CD8-positive, alpha-beta T cell (primary cell): ENCODE measurements at regions of chrX and their contacts with region 1.

Region 1: DNA sequence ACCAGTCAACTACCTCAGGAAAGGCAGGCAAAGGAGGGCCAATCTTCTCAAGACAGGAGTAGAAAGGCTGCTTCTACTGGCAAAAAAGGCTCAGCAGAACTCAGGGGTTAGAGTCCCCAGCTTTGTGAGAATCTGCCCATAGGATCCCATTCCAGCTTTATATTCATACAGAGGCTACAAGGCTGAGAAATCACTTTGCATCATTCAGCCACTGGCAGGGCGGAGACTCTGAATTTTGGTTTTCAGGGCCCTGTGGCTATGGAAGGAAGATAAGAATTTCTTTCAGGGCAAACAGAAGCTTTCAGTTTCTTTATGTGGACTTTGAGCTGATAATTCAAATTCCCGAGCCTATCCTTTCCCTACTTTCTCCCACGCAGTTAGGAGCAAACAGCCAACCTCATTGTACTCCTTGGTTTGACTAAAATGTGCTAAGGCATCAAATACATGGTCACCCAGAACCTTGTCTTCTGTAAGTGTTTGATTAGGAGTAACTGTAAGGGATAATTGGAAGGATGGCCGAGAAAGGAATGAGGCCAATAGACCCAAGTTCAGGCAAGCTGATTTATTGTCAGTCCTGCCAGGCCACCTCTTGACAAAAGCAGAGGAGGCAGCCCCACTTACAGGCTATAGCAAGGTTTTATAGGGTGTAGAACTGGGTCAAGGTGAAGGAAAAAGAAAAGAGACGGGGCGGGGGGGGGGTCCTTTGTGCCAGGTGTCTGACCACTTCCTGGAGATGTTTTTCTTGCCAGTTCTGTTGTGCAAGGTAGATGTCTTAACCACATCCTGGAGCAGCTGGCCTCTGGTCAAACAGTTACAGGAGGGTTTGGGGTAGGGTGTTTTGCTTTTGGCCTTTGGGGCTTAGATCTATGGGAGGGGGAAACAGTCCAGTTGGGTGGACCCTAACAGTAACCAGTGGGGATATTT is 165.3 kb upstream of the PPP1R2C start:
- DNase-seq: peak in 7 of 9 experiments; percentile 15 to 81 (median 49)
- ATAC-seq: peak; percentile 33
- H3K4me3 ChIP-seq: peak overlapping the region in 1 of 2 experiments; percentile 7
- H3K4me3 Mint-ChIP-seq: peak overlapping the region; percentile 42
- H3K27ac ChIP-seq: peak overlapping the region; percentile 53 to 82
- H3K27ac Mint-ChIP-seq: peak overlapping the region; percentile 90
- H3K4me1 ChIP-seq: peaks cover 91% of the 10 kb centered on the region
- H3K4me1 Mint-ChIP-seq: peaks cover 91% of the 10 kb centered on the region
- H3K27me3 ChIP-seq: no peaks in the 10 kb centered on the region
- H3K27me3 Mint-ChIP-seq: no peaks in the 10 kb centered on the region
- CTCF ChIP-seq: no peak

Region 2: DNA sequence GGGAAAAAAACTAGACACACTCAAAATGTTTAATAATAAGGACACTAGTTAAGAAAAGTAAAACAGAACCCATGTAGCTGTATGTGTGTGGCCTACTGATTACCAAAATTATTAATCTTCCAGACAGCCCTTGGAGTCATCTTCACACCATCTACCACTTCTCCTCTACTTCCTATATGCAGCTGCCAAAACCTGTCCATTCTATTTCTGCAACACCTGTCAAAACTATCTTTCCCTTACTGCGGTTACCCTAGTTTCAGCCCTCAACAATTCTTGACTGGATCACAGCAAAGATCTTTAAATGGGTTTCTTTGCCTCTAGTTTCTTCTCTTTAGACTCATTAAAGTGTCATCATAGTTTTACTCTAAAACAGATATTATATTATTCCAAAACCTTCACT is 1146.7 kb before region 1 on chrX:
- CTCF ChIA-PET with region 1: interaction called, 5 read pairs
- POLR2A ChIA-PET with region 1: interaction called, 3 read pairs
- intact Hi-C with region 1: loop called in 1 of 2 experiments (anchors 5 kb)
- DNase-seq: peak in 2 of 9 experiments; percentile 8
- ATAC-seq: no peak
- H3K4me3 ChIP-seq: no peak overlapping the region
- H3K4me3 Mint-ChIP-seq: no peak overlapping the region
- H3K27ac ChIP-seq: no peak overlapping the region
- H3K27ac Mint-ChIP-seq: peak overlapping the region; percentile 56
- H3K4me1 ChIP-seq: peaks cover 13% of the 10 kb centered on the region
- H3K4me1 Mint-ChIP-seq: peaks cover 37% of the 10 kb centered on the region
- H3K27me3 ChIP-seq: no peaks in the 10 kb centered on the region
- H3K27me3 Mint-ChIP-seq: no peaks in the 10 kb centered on the region
- CTCF ChIP-seq: no peak

Region 3: DNA sequence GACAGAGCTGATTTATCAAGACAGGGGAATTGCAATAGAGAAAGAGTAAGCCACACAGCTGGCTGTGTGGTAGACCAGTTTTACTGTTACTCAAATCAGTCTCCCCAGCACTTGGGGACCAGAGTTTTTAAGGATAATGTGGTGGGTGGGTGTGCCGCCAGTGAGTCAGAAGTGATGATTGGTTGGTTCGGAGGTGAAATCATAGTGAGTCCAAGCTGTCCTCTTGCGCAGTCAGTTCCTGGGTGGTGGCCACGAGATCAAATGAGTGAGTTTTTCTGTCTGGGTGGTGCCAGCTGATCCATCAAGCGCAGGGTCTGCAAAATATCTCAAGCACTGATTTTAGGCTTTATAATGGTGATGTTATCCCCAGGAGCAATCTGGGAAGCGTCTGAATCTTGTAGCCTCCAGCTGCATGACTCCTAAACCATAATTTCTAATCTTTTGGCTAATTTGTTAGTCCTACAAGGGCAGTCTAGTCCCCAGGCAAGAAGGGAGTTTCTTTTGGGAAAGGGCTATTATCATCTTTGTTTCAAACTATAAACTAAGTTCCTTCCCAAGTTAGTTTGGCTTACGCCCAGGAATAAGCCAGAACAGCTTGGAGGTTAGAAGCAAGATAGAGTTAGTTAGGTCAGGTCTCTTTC is 121.4 kb before region 1 on chrX:
- CTCF ChIA-PET with region 1: no interaction called
- POLR2A ChIA-PET with region 1: no interaction called
- intact Hi-C with region 1: no loop called
- DNase-seq: no peak
- ATAC-seq: no peak
- H3K4me3 ChIP-seq: no peak overlapping the region
- H3K4me3 Mint-ChIP-seq: no peak overlapping the region
- H3K27ac ChIP-seq: no peak overlapping the region
- H3K27ac Mint-ChIP-seq: no peak overlapping the region
- H3K4me1 ChIP-seq: no peaks in the 10 kb centered on the region
- H3K4me1 Mint-ChIP-seq: peaks cover 2% of the 10 kb centered on the region
- H3K27me3 ChIP-seq: no peaks in the 10 kb centered on the region
- H3K27me3 Mint-ChIP-seq: no peaks in the 10 kb centered on the region
- CTCF ChIP-seq: no peak

Region 4: GRCh38 chrX:42955349-42955748 is 12.0 kb after region 1 on chrX:
- CTCF ChIA-PET with region 1: no interaction called
- POLR2A ChIA-PET with region 1: no interaction called
- intact Hi-C with region 1: no loop called
- DNase-seq: no peak
- ATAC-seq: no peak
- H3K4me3 ChIP-seq: no peak overlapping the region
- H3K4me3 Mint-ChIP-seq: peak overlapping the region; percentile 56
- H3K27ac ChIP-seq: no peak overlapping the region
- H3K27ac Mint-ChIP-seq: peak overlapping the region; percentile 67
- H3K4me1 ChIP-seq: peaks cover 24% of the 10 kb centered on the region
- H3K4me1 Mint-ChIP-seq: peaks cover 29% of the 10 kb centered on the region
- H3K27me3 ChIP-seq: no peaks in the 10 kb centered on the region
- H3K27me3 Mint-ChIP-seq: no peaks in the 10 kb centered on the region
- CTCF ChIP-seq: no peak

Region 5: DNA sequence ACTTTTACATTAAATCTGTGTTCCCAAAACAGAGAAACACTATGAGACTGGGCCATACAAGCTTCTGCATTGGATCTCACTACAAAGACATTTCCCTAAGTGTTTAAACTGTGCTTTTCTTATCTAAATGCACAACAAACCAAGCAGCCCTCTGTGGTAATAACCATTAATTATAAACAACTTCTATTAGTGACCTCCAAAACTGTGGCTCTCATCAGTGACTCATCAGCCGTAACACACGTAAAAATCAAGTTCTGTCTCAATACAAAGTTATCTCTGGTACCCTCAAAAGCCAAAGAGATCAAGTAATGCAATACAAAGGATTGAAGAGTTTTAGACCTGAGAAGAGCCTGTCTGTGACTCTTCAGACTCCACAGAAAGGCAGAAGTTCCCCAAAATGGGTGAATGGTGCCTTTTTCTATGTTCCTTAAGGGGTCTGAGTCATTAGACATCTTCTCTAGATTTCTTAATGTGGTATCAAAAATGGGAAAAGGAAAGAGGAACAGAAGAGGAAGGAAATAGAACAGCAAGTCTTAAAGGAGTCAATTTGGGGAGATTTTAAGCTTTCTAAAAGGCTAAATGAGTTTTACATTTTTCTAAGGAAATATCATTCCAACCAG is 24.5 kb after region 1 on chrX:
- CTCF ChIA-PET with region 1: no interaction called
- POLR2A ChIA-PET with region 1: no interaction called
- intact Hi-C with region 1: no loop called
- DNase-seq: no peak
- ATAC-seq: no peak
- H3K4me3 ChIP-seq: no peak overlapping the region
- H3K4me3 Mint-ChIP-seq: no peak overlapping the region
- H3K27ac ChIP-seq: no peak overlapping the region
- H3K27ac Mint-ChIP-seq: no peak overlapping the region
- H3K4me1 ChIP-seq: no peaks in the 10 kb centered on the region
- H3K4me1 Mint-ChIP-seq: peaks cover 4% of the 10 kb centered on the region
- H3K27me3 ChIP-seq: no peaks in the 10 kb centered on the region
- H3K27me3 Mint-ChIP-seq: no peaks in the 10 kb centered on the region
- CTCF ChIP-seq: no peak

Region 6: DNA sequence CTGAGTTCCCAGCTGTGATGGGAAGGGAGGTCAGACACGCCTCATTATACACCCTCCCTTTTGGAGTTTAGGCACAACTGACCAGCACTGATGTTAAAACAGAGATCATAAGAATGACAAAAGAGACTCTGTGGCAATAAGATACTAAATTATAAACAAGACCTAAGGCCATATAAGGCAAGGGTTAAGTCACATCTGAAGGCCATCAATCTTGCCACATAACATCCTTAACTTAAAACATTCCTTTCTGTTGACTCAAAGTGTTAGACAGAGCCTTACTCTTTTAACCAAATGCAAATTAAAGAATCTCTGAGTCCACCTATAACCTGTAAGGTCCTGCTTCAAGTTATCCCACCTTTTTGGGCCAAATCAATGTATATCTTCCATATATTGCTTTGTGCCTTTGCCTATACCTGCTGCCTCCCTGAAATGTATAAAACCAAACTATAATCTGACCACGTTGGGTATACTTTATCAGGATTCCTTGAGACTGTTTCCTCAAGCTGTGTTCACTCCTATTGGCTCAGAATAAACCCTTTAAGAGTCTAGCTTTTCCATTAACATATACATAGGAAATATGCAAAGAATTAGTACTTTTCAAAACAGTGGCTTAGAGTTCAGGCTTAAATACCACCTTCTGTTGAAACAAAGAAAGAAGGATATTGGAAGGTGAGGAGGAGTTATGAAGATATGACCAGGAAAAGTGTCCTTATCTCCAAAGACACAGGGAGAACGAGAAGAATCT is 49.1 kb after region 1 on chrX:
- CTCF ChIA-PET with region 1: no interaction called
- POLR2A ChIA-PET with region 1: no interaction called
- intact Hi-C with region 1: loop called in 1 of 2 experiments (anchors 10 kb)
- DNase-seq: no peak
- ATAC-seq: no peak
- H3K4me3 ChIP-seq: no peak overlapping the region
- H3K4me3 Mint-ChIP-seq: no peak overlapping the region
- H3K27ac ChIP-seq: no peak overlapping the region
- H3K27ac Mint-ChIP-seq: no peak overlapping the region
- H3K4me1 ChIP-seq: no peaks in the 10 kb centered on the region
- H3K4me1 Mint-ChIP-seq: peaks cover 8% of the 10 kb centered on the region
- H3K27me3 ChIP-seq: no peaks in the 10 kb centered on the region
- H3K27me3 Mint-ChIP-seq: no peaks in the 10 kb centered on the region
- CTCF ChIP-seq: no peak